GM10248 (cell line): ENCODE measurements at regions of chr2 and their contacts with region 1.

Region 1: DNA sequence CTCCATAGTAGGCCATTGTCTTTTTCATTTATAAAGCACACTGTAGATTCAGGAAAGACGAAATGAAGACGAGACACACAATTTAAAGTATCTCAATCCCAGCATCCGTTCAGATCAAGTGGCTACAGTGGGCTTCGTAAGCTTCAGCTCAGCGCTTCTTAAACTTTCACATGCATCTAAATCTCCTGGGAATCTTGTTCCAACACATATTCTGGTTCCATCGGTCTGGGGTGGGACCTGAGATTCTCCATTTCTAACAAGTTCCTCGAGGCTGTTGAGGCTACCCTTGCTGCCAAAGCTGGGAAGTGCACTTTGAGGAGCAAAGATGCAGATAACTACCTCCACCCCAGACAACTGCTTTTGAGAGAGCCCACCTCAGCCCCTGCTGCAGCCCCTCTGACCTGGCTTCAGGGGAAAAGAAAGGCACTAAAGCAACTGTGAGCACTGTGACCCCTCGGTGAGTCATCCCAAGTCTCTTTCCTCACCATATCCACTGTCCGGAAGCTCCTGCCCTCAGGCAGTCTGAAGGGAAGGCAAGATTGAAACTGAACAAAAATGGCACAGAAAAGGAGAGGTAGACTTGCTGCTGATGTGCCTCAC is 201.1 kb upstream of the FBXO11 start:
- DNase-seq: no peak
- CTCF ChIP-seq: no peak

Region 2: DNA sequence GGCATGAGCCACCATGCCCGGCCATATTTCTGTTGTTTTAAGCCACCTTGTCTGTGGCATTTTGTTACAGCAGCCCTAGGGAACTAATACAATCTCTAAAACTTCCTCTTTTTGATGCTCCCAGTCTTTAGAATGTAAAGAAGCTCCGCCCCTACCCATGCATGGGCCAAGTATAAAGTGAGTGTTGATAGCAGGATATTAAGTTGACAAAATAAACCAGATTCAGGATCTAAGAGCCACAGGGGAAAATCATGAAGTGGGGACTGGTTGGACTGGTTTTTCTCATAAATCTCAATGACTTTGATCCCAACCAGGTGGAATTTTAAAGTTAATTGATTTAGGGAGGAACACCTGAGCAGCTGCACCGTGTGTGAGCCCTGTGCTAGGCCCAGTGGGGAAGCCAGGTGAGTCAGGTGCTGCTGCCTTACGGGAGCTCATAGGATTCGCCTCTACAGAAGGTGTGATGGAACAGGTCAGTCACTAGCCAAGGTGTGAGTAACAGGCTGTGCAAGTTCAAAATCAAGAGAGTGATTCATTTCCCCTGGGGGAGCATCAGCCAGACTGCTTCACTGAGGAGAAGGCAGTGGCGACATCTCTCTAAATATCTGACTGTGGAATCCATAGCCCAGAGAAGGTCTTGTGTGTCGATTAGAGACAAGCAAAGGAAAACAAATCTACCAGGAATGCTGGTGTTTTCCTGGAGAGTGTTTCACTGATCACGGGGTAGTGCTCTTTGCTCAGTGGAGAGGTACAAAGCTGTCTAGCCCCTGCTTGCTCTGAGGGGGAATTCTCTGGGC is 767.5 kb before region 1 on chr2:
- CTCF ChIA-PET with region 1: interaction called, 13 read pairs
- POLR2A ChIA-PET with region 1: no interaction called
- DNase-seq: no peak
- CTCF ChIP-seq: no peak

Region 3: GRCh38 chr2:47697000-47697601 is 410.3 kb before region 1 on chr2:
- CTCF ChIA-PET with region 1: no interaction called
- POLR2A ChIA-PET with region 1: no interaction called
- DNase-seq: no peak
- CTCF ChIP-seq: no peak

Region 4: DNA sequence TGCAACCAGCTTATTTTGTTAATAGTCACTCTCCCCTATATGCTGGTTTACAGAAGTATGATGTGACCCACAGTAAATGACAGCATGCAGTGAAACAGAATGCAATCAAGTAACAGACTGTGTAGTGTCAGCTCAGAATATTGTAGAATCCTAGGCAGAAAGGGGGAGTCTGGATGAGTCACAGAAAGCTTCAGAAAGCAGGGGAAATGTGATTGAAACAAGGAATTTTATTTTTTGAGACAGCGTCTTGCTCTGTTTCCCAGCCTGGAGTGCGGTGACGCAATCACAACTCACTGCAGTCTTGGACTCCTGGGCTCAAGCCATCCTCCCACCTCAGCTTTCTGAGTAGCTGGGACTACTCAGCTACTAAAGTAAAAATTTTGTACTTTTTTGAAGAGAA is 18.7 kb after region 1 on chr2:
- CTCF ChIA-PET with region 1: interaction called, 11 read pairs
- POLR2A ChIA-PET with region 1: no interaction called
- DNase-seq: no peak
- CTCF ChIP-seq: no peak

Region 5: DNA sequence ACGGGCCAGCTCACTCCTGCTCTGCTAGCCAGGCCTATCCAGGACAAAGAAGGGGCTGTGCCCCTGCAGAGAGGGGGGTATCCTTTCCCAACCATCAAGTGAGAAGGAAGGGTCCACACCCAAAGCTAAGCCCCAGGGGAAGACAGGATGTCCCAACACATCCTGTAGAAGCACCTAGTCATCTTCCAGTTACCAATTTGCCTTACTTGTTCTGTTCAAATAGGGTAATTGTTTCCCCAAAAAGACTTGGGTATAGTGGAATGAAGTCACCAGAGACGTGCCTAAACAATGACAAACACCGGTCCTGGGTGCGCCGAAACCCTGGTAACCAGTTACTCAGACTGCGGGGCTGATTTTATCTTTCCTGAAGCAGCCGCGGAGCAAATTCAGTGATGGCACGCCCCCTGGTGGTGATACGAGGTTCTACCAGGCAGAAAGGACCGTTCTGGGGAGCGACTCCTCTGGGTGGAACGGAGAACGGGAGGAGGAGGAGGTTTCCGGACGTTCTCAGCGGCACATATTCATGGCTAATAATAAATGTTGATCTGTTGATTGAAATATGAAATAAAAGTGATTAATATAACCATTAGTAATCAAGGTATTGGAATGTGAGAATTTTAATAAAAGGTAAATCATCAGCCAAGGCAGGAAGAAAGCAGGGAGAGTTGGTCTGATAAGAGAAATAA is 313.2 kb after region 1 on chr2:
- CTCF ChIA-PET with region 1: interaction called, 28 read pairs
- POLR2A ChIA-PET with region 1: no interaction called
- DNase-seq: peak; percentile 88
- CTCF ChIP-seq: peak; percentile 92

Region 6: GRCh38 chr2:48589170-48589767 is 481.8 kb after region 1 on chr2:
- CTCF ChIA-PET with region 1: interaction called, 10 read pairs
- POLR2A ChIA-PET with region 1: no interaction called
- DNase-seq: peak; percentile 25
- CTCF ChIP-seq: peak; percentile 60